ENCODE measurements at regions of chr6 and their contacts with region 1.

Region 1: GRCh38 chr6:87701676-87702588 is at the start of gene AKIRIN2:
- DNase-seq: peak; percentile 98
- ATAC-seq: peak; percentile 79
- H3K4me3 Mint-ChIP-seq: peak within 1 kb of the TSS; percentile 86
- H3K27ac Mint-ChIP-seq: peak within 1 kb of the TSS; percentile 90
- H3K4me1 Mint-ChIP-seq: peaks cover 35% of the 10 kb centered on the region
- H3K27me3 Mint-ChIP-seq: no peaks in the 10 kb centered on the region
- CTCF ChIP-seq: no peak
- total RNA-seq, gene AKIRIN2: 42.1 to 45.6 TPM

Region 2: DNA sequence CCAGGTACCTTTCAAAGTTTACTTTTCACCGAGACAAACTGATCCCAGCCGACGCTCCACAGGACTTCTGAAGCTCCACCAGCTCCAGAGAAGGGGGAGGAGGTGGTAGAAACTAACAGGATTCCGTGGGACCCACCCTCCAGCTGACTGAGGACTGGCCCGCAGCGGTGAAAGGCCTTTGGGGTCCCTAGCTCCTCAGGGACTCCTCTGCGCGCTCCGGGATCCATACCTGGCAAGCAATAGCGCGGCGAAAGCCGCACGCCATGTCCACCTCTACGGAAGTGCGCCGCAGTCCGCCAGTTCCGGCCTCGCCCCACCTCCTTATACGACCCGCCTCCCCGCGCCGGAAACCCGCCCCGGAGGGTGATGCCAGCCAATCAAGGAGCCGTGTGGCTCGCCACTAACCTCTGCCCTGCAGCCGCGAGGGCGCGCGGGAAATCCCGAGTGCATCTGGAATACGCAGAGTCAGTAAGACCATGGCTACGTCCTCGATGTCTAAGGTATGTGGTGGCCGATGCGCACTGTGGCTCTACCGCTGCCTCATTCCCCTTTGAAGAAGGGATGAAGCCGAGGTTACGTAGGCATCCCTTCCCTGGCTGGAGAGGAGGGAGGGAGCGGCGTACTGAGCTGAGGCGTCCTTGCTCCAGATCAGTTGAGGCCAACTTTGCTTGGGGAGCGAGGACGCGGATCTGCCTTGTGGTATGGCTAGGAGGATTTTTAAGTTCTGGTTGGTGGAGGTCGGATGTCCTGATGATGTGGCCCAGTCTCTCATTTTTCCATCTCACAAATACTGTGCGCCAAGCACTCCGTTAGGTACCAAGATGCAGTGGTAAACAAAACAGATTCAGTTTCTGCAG is 112.0 kb before region 1 on chr6 and contains the starts of genes ORC3 and RARS2:
- CTCF ChIA-PET with region 1: interaction called, 3 read pairs
- POLR2A ChIA-PET with region 1: interaction called, 9 read pairs
- intact Hi-C with region 1: loop called (anchors 2 kb)
- DNase-seq: peak; percentile 97
- ATAC-seq: peak; percentile 99
- H3K4me3 Mint-ChIP-seq: peak within 1 kb of the TSS; percentile 83
- H3K27ac Mint-ChIP-seq: peak within 1 kb of the TSS; percentile 84
- H3K4me1 Mint-ChIP-seq: peaks cover 54% of the 10 kb centered on the region
- H3K27me3 Mint-ChIP-seq: no peaks in the 10 kb centered on the region
- CTCF ChIP-seq: no peak
- total RNA-seq, gene ORC3: 35.8 to 36.6 TPM
- total RNA-seq, gene RARS2: 17.4 to 20.4 TPM

Region 3: DNA sequence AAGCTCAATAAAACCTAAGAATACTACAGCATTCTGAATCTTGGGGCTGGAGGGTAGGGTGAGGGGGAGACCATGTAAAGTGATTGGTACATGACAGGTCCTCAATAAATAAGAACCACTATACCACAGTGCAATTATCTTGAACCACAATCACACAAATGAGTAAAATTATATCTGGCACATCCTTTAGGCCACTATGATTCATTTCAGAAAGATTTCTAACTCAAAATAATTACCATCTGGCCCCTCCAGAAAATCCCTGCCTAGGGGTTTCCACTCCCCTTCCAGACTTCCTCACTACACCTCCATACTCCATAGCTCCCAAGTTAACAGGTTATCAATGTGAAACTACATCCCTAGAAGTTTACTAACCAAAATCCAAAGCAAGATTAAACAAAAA is 19.6 kb before region 1 on chr6:
- CTCF ChIA-PET with region 1: interaction called, 6 read pairs
- POLR2A ChIA-PET with region 1: interaction called, 9 read pairs
- intact Hi-C with region 1: loop called (anchors 1 kb)
- DNase-seq: peak; percentile 26
- ATAC-seq: peak; percentile 93
- H3K4me3 Mint-ChIP-seq: no peak overlapping the region
- H3K27ac Mint-ChIP-seq: peak overlapping the region; percentile 50
- H3K4me1 Mint-ChIP-seq: peaks cover 64% of the 10 kb centered on the region
- H3K27me3 Mint-ChIP-seq: no peaks in the 10 kb centered on the region
- CTCF ChIP-seq: no peak

Region 4: DNA sequence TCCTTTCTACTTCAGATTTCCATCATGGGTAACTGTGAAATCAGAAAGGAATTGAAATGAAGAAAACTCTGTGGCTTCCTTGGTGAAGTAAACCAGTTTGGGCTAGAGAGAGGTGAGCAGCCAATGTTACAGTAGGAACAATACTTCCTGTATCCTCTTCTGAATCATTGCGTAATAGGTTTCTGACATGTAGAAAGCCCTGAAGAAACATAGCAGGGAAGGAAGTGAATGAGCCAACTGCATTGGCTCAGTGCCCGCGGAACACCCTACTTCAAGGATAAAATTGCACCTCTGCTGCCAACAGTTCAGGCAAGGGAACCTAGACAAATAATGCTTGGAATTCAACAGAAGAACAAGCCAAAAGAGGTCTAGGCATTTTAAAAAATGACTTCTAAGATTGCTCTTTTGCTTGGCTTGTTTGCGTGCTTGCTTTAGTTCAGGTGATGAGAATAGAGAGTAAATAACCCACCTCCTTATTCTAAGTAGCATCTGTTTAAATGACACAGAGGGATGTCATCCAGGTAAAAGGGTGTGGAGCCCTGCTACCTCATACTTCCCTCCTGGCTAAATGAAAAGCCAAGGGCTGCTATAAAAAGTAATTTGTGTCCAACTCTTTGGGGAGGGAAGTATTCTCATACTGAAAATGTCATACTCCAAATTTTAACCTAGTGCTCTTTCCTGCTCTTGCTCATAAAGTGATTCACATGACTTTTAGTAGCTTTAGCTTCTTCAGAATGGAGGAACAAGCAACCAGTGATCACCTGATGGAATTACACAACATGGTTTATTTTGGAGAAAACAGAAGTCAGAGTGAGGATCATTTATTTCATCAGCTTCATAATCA is 30.1 kb after region 1 on chr6:
- CTCF ChIA-PET with region 1: no interaction called
- POLR2A ChIA-PET with region 1: interaction called, 4 read pairs
- intact Hi-C with region 1: loop called (anchors 5 kb)
- DNase-seq: peak; percentile 51
- ATAC-seq: peak; percentile 85
- H3K4me3 Mint-ChIP-seq: no peak overlapping the region
- H3K27ac Mint-ChIP-seq: peak overlapping the region; percentile 57
- H3K4me1 Mint-ChIP-seq: peaks cover 14% of the 10 kb centered on the region
- H3K27me3 Mint-ChIP-seq: no peaks in the 10 kb centered on the region
- CTCF ChIP-seq: no peak

Region 5: DNA sequence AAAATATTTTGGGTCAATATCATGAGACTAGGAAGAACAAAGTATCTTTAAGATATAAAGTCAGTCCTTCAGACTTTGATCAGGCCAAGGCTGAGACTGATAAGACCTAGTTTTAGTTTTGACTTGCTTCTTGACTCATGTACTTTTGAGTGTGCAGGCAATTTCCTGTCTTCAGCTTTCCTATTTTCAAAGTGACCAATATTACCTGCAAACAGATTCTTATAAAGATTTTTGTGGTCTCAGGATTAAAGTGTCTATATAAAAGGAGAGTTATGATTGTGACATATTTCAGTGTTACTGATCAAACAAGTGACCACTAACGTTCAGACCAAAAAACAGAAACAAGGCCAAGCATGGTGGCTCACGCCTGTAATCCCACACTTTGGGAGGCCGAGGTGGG is 36.1 kb after region 1 on chr6:
- CTCF ChIA-PET with region 1: no interaction called
- POLR2A ChIA-PET with region 1: interaction called, 11 read pairs
- intact Hi-C with region 1: loop called (anchors 5 kb)
- DNase-seq: no peak
- ATAC-seq: peak; percentile 28
- H3K4me3 Mint-ChIP-seq: no peak overlapping the region
- H3K27ac Mint-ChIP-seq: peak overlapping the region; percentile 28
- H3K4me1 Mint-ChIP-seq: peaks cover 33% of the 10 kb centered on the region
- H3K27me3 Mint-ChIP-seq: no peaks in the 10 kb centered on the region
- CTCF ChIP-seq: no peak

Region 6: DNA sequence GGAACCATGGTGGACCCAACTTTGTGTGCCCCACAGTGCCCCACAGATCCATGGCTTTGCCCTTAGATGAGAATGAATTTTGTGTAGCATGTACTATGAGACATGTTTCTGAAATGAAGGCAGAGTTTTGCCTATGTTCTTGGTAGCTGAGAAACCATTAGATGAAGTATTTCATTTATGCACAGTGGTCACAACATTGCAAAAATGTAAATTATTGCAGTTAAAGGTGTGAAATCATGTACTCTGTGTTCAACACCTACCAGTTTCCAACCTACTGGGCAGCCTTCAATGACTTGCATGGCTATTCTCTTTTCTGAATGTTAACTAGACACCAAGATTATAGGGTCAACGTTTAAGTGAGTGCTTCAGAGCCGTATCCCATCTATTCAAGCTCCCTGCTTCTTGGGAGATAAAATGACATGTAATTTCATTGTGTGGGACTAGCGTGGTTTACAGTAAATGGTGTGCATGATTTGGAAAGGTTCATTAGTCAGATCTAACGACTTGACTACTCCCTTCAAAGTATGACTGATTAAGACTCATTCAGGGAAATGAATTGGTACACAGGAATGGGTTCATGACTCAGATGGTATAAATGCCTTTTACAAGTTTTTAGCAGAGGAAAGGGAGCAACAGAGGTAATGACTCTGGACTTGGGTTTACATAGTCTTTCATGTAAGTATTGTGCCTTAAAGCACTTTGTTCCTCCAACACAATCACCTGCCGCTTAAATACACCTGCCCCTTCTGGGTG is 106.2 kb after region 1 on chr6:
- CTCF ChIA-PET with region 1: no interaction called
- POLR2A ChIA-PET with region 1: no interaction called
- intact Hi-C with region 1: no loop called
- DNase-seq: no peak
- ATAC-seq: peak; percentile 51
- H3K4me3 Mint-ChIP-seq: no peak overlapping the region
- H3K27ac Mint-ChIP-seq: no peak overlapping the region
- H3K4me1 Mint-ChIP-seq: peaks cover 3% of the 10 kb centered on the region
- H3K27me3 Mint-ChIP-seq: peaks cover 12% of the 10 kb centered on the region
- CTCF ChIP-seq: no peak